Left ventricle myocardium superior (tissue), 1 donor: ENCODE measurements at regions of chr1 and their contacts with region 1.

Region 1: GRCh38 chr1:220879076-220879508 is at the start of gene HLX:
- DNase-seq: peak; percentile 95
- ATAC-seq: peak; percentile 94
- total RNA-seq, gene HLX: 4.0 TPM

Region 2: GRCh38 chr1:220604934-220605333 is 274.2 kb before region 1 on chr1:
- intact Hi-C with region 1: no loop called
- DNase-seq: no peak
- ATAC-seq: no peak

Region 3: GRCh38 chr1:220810179-220810653 is 68.9 kb before region 1 on chr1:
- intact Hi-C with region 1: loop called (anchors 10 kb)
- DNase-seq: peak; percentile 86
- ATAC-seq: peak; percentile 79